ENCODE measurements at regions of chr12 and their contacts with region 1.

Region 1: GRCh38 chr12:810671-811415 is 58.5 kb downstream of the WNK1 start:
- DNase-seq: no peak
- ATAC-seq: no peak
- H3K4me3 ChIP-seq: no peak overlapping the region
- H3K27ac ChIP-seq: no peak overlapping the region
- H3K4me1 ChIP-seq: peaks cover 64% of the 10 kb centered on the region
- CTCF ChIP-seq: no peak
- EP300 ChIP-seq: no peak
- POLR2A ChIP-seq: no peak
- RAD21 ChIP-seq: no peak

Region 2: GRCh38 chr12:356276-356988 is 454.4 kb before region 1 on chr12:
- CTCF ChIA-PET with region 1: no interaction called
- POLR2A ChIA-PET with region 1: no interaction called
- DNase-seq: no peak
- ATAC-seq: no peak
- H3K4me3 ChIP-seq: no peak overlapping the region
- H3K27ac ChIP-seq: no peak overlapping the region
- H3K4me1 ChIP-seq: peaks cover 4% of the 10 kb centered on the region; the same call in 1 of the 3 replicates
- CTCF ChIP-seq: no peak
- EP300 ChIP-seq: no peak
- POLR2A ChIP-seq: no peak
- RAD21 ChIP-seq: no peak

Region 3: GRCh38 chr12:561908-562593 is 248.8 kb before region 1 on chr12:
- CTCF ChIA-PET with region 1: interaction called, 12 read pairs
- POLR2A ChIA-PET with region 1: no interaction called
- DNase-seq: no peak
- ATAC-seq: no peak
- H3K4me3 ChIP-seq: no peak overlapping the region
- H3K27ac ChIP-seq: no peak overlapping the region
- H3K4me1 ChIP-seq: no peaks in the 10 kb centered on the region
- CTCF ChIP-seq: no peak
- EP300 ChIP-seq: no peak
- POLR2A ChIP-seq: no peak
- RAD21 ChIP-seq: no peak

Region 4: GRCh38 chr12:795305-795704 is 15.5 kb before region 1 on chr12:
- CTCF ChIA-PET with region 1: interaction called, 24 read pairs
- POLR2A ChIA-PET with region 1: no interaction called
- DNase-seq: no peak
- ATAC-seq: no peak
- H3K4me3 ChIP-seq: no peak overlapping the region
- H3K27ac ChIP-seq: no peak overlapping the region
- H3K4me1 ChIP-seq: peaks cover 35% of the 10 kb centered on the region
- CTCF ChIP-seq: no peak
- EP300 ChIP-seq: no peak
- POLR2A ChIP-seq: no peak
- RAD21 ChIP-seq: no peak

Region 5: DNA sequence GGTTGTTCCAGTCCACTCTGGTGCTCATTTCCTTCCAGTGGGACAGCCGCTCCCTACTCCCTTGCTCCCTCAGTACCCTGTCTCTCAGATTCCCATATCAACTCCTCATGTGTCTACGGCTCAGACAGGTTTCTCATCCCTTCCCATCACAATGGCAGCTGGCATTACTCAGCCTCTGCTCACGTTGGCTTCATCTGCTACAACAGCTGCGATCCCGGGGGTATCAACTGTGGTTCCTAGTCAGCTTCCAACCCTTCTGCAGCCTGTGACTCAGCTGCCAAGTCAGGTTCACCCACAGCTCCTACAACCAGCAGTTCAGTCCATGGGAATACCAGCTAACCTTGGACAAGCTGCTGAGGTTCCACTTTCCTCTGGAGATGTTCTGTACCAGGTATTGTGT is 68.8 kb after region 1 on chr12:
- CTCF ChIA-PET with region 1: interaction called, 10 read pairs
- POLR2A ChIA-PET with region 1: no interaction called
- DNase-seq: no peak
- ATAC-seq: no peak
- H3K4me3 ChIP-seq: no peak overlapping the region
- H3K27ac ChIP-seq: no peak overlapping the region
- H3K4me1 ChIP-seq: no peaks in the 10 kb centered on the region
- CTCF ChIP-seq: no peak
- EP300 ChIP-seq: no peak
- POLR2A ChIP-seq: no peak
- RAD21 ChIP-seq: no peak

Region 6: DNA sequence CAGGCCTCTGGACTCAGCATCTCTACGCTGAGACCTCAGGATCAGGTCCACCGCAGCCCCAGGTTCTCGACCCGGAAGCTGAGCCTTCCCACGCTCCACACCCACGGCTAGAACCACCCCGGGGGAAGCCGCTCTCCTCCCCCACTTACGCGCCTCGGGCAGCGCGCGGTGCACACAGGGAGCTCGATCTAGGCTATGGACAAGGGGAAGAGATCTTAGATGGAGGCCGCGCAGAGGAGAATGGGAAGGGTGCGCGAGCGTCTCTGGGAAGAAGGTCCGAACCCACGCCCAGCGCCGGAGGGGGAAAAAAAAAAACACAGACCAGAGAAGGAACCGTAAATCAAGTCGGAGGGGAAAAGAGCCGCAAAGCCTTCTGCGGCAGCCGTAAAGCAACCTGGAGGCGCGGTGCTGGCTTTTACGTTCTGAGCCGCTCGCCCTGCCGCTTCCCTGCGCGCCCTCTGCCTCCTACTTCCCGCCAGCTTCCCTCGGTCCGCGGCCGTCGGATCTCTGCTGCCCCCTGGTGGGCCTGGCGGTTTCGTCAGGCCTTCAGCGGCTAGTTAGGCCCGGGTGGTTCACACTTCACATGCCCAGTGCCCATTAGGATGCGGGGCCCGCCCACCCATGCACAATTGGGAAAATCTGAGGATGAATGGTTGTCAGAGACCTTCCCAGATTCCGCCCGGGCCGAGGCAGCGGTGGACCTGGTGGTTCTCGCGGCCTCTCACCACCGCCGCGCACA is 138.8 kb after region 1 on chr12 and contains the start of gene RAD52:
- CTCF ChIA-PET with region 1: interaction called, 43 read pairs
- POLR2A ChIA-PET with region 1: no interaction called
- DNase-seq: peak; percentile 82 to 100
- ATAC-seq: peak; percentile 96 to 97
- H3K4me3 ChIP-seq: peak within 1 kb of the TSS; percentile 69
- H3K27ac ChIP-seq: peak within 1 kb of the TSS; percentile 88 to 98
- H3K4me1 ChIP-seq: peaks cover 11% of the 10 kb centered on the region; the same call in 1 of the 3 replicates
- CTCF ChIP-seq: peak; percentile 95
- EP300 ChIP-seq: no peak
- POLR2A ChIP-seq: peak; percentile 77
- RAD21 ChIP-seq: peak; percentile 87 to 94
- polyA plus RNA-seq, gene RAD52: 23.6 and 29.6 TPM in 2 replicates

Region 7: GRCh38 chr12:1246637-1247036 is 435.8 kb after region 1 on chr12:
- CTCF ChIA-PET with region 1: no interaction called
- POLR2A ChIA-PET with region 1: no interaction called
- DNase-seq: no peak
- ATAC-seq: no peak
- H3K4me3 ChIP-seq: no peak overlapping the region
- H3K27ac ChIP-seq: no peak overlapping the region; a peak in 1 of 6 replicates
- H3K4me1 ChIP-seq: peaks cover 4% of the 10 kb centered on the region; the same call in 1 of the 3 replicates
- CTCF ChIP-seq: no peak
- EP300 ChIP-seq: no peak
- POLR2A ChIP-seq: no peak
- RAD21 ChIP-seq: no peak

Region 8: DNA sequence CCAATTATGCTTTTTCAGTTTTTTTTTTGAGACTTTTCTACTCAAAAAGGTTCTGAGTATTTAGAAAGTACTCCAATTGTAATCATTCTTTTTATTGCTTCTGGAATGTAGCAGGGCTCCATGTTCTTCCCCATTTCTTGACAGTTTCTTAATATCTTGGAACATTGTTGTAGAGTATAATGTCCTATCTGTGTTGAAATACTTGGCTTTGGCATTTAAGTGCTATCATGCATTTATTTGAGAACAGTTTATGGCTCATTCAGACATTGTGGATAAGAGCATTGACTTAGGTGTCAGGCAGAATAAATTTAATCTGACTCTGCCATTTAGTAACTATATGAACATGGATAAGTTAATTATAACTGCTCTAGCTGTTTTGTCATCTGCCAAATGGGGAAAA is 908.3 kb after region 1 on chr12:
- CTCF ChIA-PET with region 1: no interaction called
- POLR2A ChIA-PET with region 1: no interaction called
- DNase-seq: no peak
- ATAC-seq: no peak
- H3K4me3 ChIP-seq: no peak overlapping the region
- H3K27ac ChIP-seq: no peak overlapping the region
- H3K4me1 ChIP-seq: peaks cover 9% of the 10 kb centered on the region
- CTCF ChIP-seq: no peak
- EP300 ChIP-seq: no peak
- POLR2A ChIP-seq: no peak
- RAD21 ChIP-seq: no peak

Measured in A549 (cell line).